Head of caudate nucleus (tissue), 42 donors: ENCODE measurements at regions of chr4 and their contacts with region 1.

Region 1: DNA sequence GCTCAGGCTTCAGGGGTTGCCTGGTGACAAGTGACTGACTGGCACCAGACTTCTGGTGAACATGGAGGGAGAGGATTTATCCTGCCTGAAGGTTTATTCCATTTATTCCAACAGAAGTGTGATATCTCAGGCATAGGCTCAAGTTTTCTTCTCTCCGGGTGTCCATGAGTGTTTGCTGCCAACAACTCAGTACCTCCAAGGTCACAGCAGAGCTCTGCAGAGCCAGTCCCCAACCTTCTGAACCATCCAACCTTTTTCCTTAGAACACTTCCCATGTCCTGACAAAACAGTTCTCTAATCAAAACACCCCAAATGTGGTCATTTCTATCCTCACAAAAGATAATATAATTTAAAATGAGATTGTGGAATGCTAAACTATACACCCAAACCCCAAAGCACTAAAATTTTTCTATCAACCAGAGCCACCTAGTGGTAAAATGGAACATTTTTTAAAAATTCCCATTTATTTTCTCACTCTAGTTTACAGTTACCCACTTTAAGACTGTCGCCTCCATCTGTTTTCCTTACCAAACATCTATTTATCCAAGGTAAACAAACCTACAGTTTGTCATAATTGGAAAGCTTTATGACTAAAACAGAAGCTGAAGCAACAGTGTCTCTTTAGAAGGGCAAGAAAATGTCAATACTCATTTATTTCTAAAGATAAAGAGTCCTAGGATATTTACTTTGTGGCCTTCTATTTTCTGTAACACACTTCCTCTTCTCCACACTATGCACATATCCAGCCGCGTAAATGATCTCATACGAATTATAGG is 39.6 kb downstream of the TMEM154 start:
- DNase-seq: no peak

Region 2: GRCh38 chr4:152148057-152148456 is 492.2 kb before region 1 on chr4:
- intact Hi-C with region 1: no loop called
- DNase-seq: no peak

Region 3: GRCh38 chr4:152499344-152499743 is 140.9 kb before region 1 on chr4:
- intact Hi-C with region 1: loop called (anchors 5 kb)
- DNase-seq: no peak

Region 4: DNA sequence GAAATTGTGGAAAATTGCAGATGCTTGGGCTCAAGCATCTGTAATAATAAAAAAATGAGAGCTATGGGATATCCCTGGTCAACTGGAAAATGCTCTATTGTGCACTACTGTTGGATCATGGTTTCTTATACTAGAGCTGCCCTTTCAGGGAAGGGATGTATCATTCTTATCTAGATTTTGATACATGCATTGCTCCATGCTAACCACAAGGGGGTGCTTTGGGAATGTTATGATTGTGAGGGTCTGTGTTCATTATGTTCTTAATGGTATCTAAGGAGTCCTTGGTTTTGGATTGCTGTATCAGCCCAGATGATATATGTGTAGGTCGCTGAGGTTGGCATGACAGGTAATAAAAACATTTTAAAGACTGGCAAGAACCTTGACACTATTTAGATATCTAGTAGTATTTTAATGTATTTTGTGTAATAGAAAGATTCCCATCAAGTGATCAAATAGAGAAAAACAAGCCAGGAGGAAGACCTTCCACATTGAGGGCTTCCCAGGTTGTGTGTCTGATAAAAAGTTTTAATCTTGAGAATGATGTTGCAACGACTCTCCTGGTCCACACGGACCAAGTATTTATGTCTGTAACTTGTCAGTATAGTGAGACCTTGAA is 994.6 kb after region 1 on chr4:
- intact Hi-C with region 1: no loop called
- DNase-seq: no peak